ENCODE measurements at regions of chr7 and their contacts with region 1.

Region 1: GRCh38 chr7:135170274-135170997 is at the start of gene CYREN:
- DNase-seq: peak; percentile 99

Region 2: DNA sequence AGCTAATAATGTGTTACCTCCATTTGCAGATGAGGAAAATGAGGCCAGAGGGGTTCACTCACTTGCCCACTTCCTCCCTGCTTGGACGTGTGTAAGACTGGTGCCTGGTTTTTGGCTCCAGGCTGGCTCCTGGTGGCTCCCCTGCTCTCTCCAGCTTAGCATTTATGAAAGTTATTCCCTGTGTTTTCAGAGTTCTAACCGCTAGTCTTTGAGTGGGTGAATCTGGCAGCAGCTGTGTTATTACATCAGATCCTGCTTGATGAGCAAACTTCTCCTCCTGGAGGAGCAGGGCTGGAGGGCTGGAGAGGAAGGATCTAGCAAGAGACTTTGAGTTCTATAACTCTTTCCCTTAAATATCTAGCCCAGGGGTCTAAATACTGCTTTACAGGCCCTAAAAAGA is 265.1 kb before region 1 on chr7:
- in situ Hi-C with region 1: no loop called
- DNase-seq: peak; percentile 24

Region 3: DNA sequence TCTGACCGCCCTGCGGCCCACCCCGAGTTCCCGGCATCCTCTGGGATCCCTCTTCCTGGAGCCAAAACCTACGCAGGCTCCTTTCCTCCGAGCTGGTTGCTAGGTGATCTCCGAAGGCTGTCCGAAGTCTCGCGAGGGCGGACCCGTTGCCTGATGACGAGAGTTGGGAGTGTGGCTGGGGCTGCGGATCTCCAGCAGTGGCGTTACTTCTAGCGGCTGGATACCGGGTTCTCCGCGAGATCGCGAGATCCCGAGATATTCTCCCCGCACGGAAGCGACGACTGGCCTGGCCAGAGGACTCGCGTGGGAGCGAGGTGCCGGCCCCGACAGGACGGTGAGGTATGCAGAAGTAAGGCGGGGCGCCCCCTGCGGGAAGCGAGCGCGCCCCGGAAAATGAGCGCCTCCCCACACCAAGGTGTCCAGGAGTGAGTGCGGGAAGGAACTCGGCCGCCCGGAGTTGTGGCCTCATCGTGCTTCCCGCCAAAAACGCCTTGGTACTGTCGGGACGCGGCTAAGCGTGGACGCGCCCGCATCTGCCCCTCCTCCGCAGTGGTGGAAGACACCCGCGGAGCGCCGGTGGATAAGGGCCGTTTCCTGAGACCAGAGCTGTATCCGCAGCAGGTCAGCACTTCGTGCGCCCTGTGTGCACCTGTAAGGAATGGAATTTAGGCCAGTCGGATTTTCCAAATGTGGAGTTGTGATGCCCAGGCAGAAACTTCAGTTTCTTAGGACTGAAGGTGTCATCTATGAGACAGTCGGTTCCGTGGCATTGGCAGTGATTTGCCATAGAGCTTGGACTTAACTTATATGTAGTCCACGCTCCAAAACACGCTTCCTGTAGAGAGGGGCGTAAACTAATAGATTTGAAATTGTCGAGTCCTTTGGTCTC is 183.8 kb before region 1 on chr7 and contains the start of gene AGBL3:
- in situ Hi-C with region 1: loop called (anchors 25 kb)
- DNase-seq: peak; percentile 99

Measured in ACHN (cell line).